ENCODE measurements at regions of chr3 and their contacts with region 1.

Region 1: DNA sequence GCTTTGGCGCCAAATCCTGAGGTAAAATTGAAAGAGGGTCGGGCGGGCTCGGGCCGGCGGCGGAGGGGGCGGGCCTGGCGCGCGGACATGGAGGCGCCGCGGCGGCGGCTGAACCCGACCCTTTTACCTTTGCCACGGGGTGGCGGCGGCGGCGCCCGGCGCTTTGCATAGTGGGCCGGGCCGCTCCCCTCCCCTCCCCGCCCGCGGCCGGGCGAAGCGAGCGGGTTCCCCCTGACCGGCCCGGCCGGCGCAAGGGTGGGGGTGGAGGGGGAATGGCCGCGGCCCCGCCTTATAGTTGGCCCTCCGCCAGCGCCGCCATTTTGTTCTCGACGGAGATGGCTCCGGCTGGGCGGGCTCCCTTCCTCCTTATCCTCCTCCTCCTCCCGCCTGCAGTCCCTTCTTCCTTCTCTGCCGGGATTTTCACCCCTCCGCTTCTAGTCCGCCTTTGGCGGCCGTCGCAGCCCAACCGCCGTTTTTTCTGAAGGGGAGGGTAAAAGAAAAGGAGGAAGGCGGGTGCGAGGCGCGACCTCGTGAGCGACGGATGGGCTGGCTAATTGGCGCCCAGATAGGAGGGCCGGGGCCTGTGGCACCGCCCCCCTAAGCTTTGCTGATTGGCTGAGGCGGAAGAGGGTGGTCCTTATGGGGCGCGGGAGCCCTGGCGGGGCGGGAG is 638 bp downstream of the NR2C2 start:
- DNase-seq: peak; percentile 95 to 99 (median 96)
- H3K4me3 ChIP-seq: peak overlapping the region; percentile 63 to 83
- H3K4me3 Mint-ChIP-seq: peak overlapping the region; percentile 98 to 100 (median 100)
- H3K27ac ChIP-seq: peak overlapping the region; percentile 97
- H3K27ac Mint-ChIP-seq: peak overlapping the region; percentile 99 to 100 (median 100)
- H3K4me1 ChIP-seq: peaks cover 44% of the 10 kb centered on the region
- H3K4me1 Mint-ChIP-seq: peaks cover 27 to 71% (median 48%) of the 10 kb centered on the region in 4 donors
- H3K27me3 ChIP-seq: no peaks in the 10 kb centered on the region
- H3K27me3 Mint-ChIP-seq: no peaks in the 10 kb centered on the region

Region 2: DNA sequence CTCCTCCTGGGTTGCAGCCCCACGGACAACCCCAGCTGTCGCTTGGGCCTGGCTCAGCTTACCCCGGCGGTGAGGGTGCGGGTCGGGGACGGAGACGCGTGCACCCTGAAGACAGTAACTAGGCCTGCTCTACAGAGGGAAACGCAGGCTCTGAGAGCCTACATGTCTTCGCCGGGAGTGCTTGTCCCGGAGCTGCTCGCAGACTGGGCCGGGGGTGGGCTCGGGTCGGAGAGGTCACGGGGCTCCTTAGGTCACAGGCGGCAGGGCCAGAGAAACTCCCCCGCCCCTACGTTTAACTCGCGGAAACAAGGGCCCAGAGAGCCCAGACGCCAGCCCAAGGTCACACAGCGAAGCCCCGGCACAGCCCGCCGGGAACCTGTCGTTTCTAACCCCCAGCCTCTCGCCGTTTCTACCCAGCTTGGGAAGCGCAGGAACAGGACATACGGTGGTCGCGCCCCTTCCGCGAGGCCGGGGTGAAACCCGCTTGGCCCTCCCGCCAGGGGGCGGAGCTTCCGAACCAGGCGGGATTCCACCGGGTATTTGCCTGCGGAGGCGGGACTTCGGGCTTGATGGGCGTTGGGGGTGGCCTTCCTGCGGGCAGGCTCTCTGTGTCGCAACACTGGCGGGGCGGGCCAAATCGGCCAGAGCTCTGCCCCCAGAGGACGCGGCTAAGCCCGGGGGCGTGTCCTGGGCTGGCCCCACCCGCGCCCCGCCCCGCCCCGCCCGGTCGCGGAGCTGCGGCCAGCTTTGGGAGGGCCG is 1468.3 kb before region 1 on chr3 and contains the start of gene HDAC11:
- CTCF ChIA-PET with region 1: no interaction called
- POLR2A ChIA-PET with region 1: interaction called, 3 read pairs
- intact Hi-C with region 1: loop called (anchors 5 kb)
- DNase-seq: peak; percentile 96 to 97 (median 96)
- H3K4me3 ChIP-seq: peak within 1 kb of the TSS; percentile 52 to 92
- H3K4me3 Mint-ChIP-seq: peak within 1 kb of the TSS; percentile 91 to 95 (median 94)
- H3K27ac ChIP-seq: peak within 1 kb of the TSS; percentile 90
- H3K27ac Mint-ChIP-seq: peak within 1 kb of the TSS; percentile 94 to 96 (median 96)
- H3K4me1 ChIP-seq: peaks cover 28% of the 10 kb centered on the region
- H3K4me1 Mint-ChIP-seq: peaks cover 6 to 35% (median 20%) of the 10 kb centered on the region in 4 donors
- H3K27me3 ChIP-seq: no peaks in the 10 kb centered on the region
- H3K27me3 Mint-ChIP-seq: peaks cover 0 to under 1% of the 10 kb centered on the region in 2 donors
- total RNA-seq, gene HDAC11: 7.1 to 7.6 TPM

Region 3: GRCh38 chr3:14431892-14432834 is 515.9 kb before region 1 on chr3:
- CTCF ChIA-PET with region 1: no interaction called
- POLR2A ChIA-PET with region 1: no interaction called
- intact Hi-C with region 1: loop called (anchors 1 kb)
- DNase-seq: peak; percentile 93 to 99 (median 94)
- H3K4me3 ChIP-seq: peak overlapping the region; percentile 55 to 77
- H3K4me3 Mint-ChIP-seq: peak overlapping the region; percentile 77 to 93 (median 80)
- H3K27ac ChIP-seq: peak overlapping the region; percentile 98
- H3K27ac Mint-ChIP-seq: peak overlapping the region; percentile 97 to 100 (median 100)
- H3K4me1 ChIP-seq: peaks cover 97% of the 10 kb centered on the region
- H3K4me1 Mint-ChIP-seq: peaks cover 64 to 98% (median 87%) of the 10 kb centered on the region in 4 donors
- H3K27me3 ChIP-seq: no peaks in the 10 kb centered on the region
- H3K27me3 Mint-ChIP-seq: no peaks in the 10 kb centered on the region

Region 4: DNA sequence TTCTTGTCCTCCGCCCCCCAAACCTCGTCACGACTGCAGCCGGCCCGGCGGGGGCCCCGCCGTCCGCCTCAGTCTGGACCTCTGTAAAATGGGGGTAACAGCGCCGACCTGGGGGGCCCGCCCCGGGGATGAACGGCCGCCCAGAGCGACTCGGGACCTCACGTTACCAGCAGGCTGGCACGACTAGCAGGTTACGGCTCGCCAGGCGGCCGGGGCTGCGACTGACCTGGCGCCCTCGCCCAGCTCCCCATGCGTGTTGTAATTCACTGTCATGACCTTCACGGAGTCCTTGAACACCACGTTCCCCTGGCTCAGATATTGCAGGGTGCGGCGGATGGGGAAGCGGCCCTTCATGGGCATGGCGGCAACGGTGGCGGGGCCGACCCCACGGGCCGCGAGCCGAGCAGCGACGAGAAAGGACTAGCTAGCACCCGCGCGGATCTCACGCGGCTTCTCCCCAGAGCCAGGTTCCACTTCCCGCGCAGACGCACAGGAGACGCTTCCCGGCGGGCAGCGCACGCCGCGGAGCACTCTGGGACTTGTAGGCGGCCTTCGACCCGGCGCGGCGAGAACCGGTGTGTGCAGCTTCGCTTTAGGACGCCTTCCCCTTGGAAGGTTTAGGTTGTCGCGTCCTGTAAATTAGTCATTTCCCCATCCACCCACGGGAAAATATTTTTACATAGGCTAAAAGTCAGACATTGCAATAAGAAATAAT is 117.0 kb after region 1 on chr3 and contains the start of gene MRPS25:
- CTCF ChIA-PET with region 1: no interaction called
- POLR2A ChIA-PET with region 1: interaction called, 11 read pairs
- intact Hi-C with region 1: loop called (anchors 1 kb)
- DNase-seq: peak; percentile 86 to 90 (median 89)
- H3K4me3 ChIP-seq: peak within 1 kb of the TSS; percentile 19 to 78
- H3K4me3 Mint-ChIP-seq: peak within 1 kb of the TSS; percentile 93 to 99 (median 96)
- H3K27ac ChIP-seq: peak within 1 kb of the TSS; percentile 79
- H3K27ac Mint-ChIP-seq: peak within 1 kb of the TSS; percentile 88 to 98 (median 96)
- H3K4me1 ChIP-seq: peaks cover 18% of the 10 kb centered on the region
- H3K4me1 Mint-ChIP-seq: peaks cover 11 to 34% (median 23%) of the 10 kb centered on the region in 4 donors
- H3K27me3 ChIP-seq: no peaks in the 10 kb centered on the region
- H3K27me3 Mint-ChIP-seq: no peaks in the 10 kb centered on the region
- total RNA-seq, gene MRPS25: 77.1 to 80.3 TPM

Region 5: DNA sequence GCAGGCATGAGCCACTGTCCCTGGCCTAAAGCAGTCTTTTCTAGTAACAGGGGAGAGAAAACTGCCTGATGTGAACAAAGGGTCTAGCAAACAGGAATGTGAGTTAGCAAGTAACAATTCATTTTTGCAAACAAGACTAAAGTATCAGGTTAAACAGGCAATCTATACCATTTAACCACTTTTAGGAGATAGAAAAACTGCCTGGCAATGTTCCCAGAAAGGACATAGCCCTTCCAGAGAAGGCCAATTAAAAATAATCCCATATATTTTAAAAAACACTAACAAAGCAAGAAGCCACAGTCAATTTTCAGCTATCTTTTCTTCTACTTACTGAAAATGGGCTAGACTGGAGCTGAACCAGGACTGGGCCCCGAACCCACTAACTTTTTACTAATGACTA is 144.7 kb after region 1 on chr3:
- CTCF ChIA-PET with region 1: no interaction called
- POLR2A ChIA-PET with region 1: no interaction called
- intact Hi-C with region 1: no loop called
- DNase-seq: no peak
- H3K4me3 ChIP-seq: no peak overlapping the region
- H3K4me3 Mint-ChIP-seq: no peak overlapping the region
- H3K27ac ChIP-seq: no peak overlapping the region
- H3K27ac Mint-ChIP-seq: no peak overlapping the region
- H3K4me1 ChIP-seq: peaks cover 8% of the 10 kb centered on the region
- H3K4me1 Mint-ChIP-seq: peaks cover 8 to 21% (median 13%) of the 10 kb centered on the region in 4 donors
- H3K27me3 ChIP-seq: no peaks in the 10 kb centered on the region
- H3K27me3 Mint-ChIP-seq: no peaks in the 10 kb centered on the region

Region 6: DNA sequence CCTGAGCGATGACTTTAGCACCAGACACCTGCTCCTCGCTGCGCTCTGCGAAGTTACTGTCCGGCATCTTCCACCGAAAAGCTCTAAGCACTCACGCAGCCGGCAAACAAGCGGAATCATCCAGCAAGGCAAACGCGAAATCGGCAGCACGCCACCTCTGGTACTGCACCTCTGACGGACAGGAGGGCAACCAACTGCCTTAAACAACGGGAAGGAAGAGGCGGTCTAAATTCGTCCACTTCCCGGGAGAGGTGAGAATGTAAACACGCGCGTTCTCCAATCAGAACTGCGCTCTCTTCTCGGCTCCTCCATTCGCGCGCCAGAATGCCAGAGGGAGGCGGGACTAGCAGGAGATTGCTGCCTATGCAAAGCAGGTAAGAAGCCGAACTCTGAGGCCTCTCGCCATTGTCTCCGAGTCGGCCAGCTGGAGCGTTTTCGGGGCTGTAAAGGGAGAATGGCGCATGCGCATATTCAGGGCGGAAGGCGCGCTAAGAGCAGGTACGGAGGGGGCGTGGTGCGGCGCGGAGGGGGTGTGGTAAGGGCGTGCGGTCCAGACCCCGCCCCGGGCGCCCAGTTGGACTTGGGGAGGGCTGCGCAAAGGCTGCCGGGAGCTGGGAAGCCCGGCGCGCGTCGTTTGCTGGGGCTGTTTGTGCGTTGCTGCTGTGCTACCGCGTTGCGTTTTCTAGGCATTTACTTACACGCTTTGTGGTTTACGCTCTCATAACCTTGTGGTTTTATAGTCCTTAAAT is 653.5 kb after region 1 on chr3 and contains the starts of genes BTD and HACL1:
- CTCF ChIA-PET with region 1: no interaction called
- POLR2A ChIA-PET with region 1: no interaction called
- intact Hi-C with region 1: loop called (anchors 5 kb)
- DNase-seq: peak; percentile 98 to 100 (median 99)
- H3K4me3 ChIP-seq: peak within 1 kb of the TSS; percentile 65 to 100
- H3K4me3 Mint-ChIP-seq: peak within 1 kb of the TSS; percentile 97 to 100 (median 100)
- H3K27ac ChIP-seq: peak within 1 kb of the TSS; percentile 83
- H3K27ac Mint-ChIP-seq: peak within 1 kb of the TSS; percentile 94 to 100 (median 99)
- H3K4me1 ChIP-seq: peaks cover 37% of the 10 kb centered on the region
- H3K4me1 Mint-ChIP-seq: peaks cover 32 to 70% (median 50%) of the 10 kb centered on the region in 4 donors
- H3K27me3 ChIP-seq: no peaks in the 10 kb centered on the region
- H3K27me3 Mint-ChIP-seq: no peaks in the 10 kb centered on the region
- total RNA-seq, gene BTD: 23.5 to 27.4 TPM
- total RNA-seq, gene HACL1: 37.6 to 44.4 TPM

Measured in CD4-positive, alpha-beta memory T cell (primary cell).